PC-3 (cell line): ENCODE measurements at regions of chr6 and their contacts with region 1.

Region 1: DNA sequence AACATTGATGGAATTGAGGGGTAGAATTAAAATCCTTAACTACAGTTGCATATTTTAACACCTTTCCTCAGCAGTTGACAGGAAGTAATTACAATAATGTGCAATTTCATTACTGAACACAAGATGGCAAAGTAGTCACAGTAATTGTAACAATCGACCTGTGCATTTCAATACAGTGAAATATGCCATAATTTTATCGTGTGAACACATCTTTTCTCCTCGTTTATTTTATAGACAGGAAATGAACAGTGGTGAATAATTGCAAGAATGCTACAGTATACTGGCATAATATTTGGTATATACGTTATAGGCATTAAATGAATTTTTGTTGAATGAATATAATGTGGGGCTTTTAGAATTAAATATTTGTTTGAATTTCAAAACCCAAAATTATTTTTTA is 25.0 kb downstream of the CYB5R4 start:
- DNase-seq: peak; percentile 67
- ATAC-seq: peak; percentile 78
- H3K4me3 ChIP-seq: no peak overlapping the region
- H3K27ac ChIP-seq: no peak overlapping the region
- H3K4me1 ChIP-seq: peaks cover 3% of the 10 kb centered on the region; the same call in 1 of the 2 replicates
- H3K27me3 ChIP-seq: no peaks in the 10 kb centered on the region
- CTCF ChIP-seq: peak; percentile 81

Region 2: GRCh38 chr6:82842721-82843120 is 1041.8 kb before region 1 on chr6:
- CTCF ChIA-PET with region 1: no interaction called
- POLR2A ChIA-PET with region 1: no interaction called
- intact Hi-C with region 1: no loop called
- DNase-seq: no peak
- ATAC-seq: no peak
- H3K4me3 ChIP-seq: no peak overlapping the region
- H3K27ac ChIP-seq: no peak overlapping the region
- H3K4me1 ChIP-seq: no peaks in the 10 kb centered on the region
- H3K27me3 ChIP-seq: no peaks in the 10 kb centered on the region
- CTCF ChIP-seq: no peak

Region 3: GRCh38 chr6:83859410-83860358 is 24.8 kb before region 1 on chr6 and contains the start of gene CYB5R4:
- CTCF ChIA-PET with region 1: no interaction called
- POLR2A ChIA-PET with region 1: no interaction called
- intact Hi-C with region 1: no loop called
- DNase-seq: peak; percentile 92
- ATAC-seq: peak; percentile 92
- H3K4me3 ChIP-seq: peak within 1 kb of the TSS; percentile 87
- H3K27ac ChIP-seq: no peak within 1 kb of the TSS
- H3K4me1 ChIP-seq: peaks cover 9% of the 10 kb centered on the region
- H3K27me3 ChIP-seq: no peaks in the 10 kb centered on the region
- CTCF ChIP-seq: peak; percentile 47; the same call in 1 of the 2 replicates
- total RNA-seq, gene CYB5R4: 5.1 and 5.6 TPM in 2 replicates

Region 4: GRCh38 chr6:84027340-84028181 is 143.0 kb after region 1 on chr6:
- CTCF ChIA-PET with region 1: no interaction called
- POLR2A ChIA-PET with region 1: no interaction called
- intact Hi-C with region 1: loop called (anchors 5 kb)
- DNase-seq: peak; percentile 74
- ATAC-seq: peak; percentile 91
- H3K4me3 ChIP-seq: no peak overlapping the region
- H3K27ac ChIP-seq: no peak overlapping the region
- H3K4me1 ChIP-seq: peaks cover 15% of the 10 kb centered on the region
- H3K27me3 ChIP-seq: no peaks in the 10 kb centered on the region
- CTCF ChIP-seq: no peak

Region 5: GRCh38 chr6:84220809-84221409 is 336.4 kb after region 1 on chr6:
- CTCF ChIA-PET with region 1: no interaction called
- POLR2A ChIA-PET with region 1: no interaction called
- intact Hi-C with region 1: loop called (anchors 1 kb)
- DNase-seq: peak; percentile 48
- ATAC-seq: no peak
- H3K4me3 ChIP-seq: no peak overlapping the region
- H3K27ac ChIP-seq: no peak overlapping the region
- H3K4me1 ChIP-seq: no peaks in the 10 kb centered on the region
- H3K27me3 ChIP-seq: no peaks in the 10 kb centered on the region
- CTCF ChIP-seq: peak; percentile 56